ENCODE measurements at regions of chr20 and their contacts with region 1.

Region 1: DNA sequence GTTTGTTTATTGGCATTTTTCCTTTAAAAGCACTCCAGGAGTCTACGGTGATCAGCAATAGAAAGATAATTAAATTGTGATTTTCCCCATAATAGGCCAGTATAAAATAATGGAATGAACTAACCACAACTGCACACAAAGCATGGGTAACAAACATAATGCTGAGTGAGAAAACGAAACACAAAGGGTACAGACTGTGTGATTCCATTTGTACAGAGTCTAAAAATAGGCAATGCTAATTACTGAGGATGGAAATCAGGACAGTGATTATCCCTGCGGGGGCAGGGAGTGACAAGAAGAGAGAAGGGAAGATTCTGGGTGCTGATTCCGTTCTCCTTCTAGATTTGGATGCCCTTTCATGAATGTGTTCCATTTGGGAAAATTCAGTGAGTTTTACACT is 478.1 kb downstream of the PREX1 start:
- DNase-seq: no peak
- ATAC-seq: no peak
- H3K4me3 ChIP-seq: no peak overlapping the region
- H3K27ac ChIP-seq: no peak overlapping the region
- H3K4me1 ChIP-seq: no peaks in the 10 kb centered on the region
- H3K27me3 ChIP-seq: peaks cover 13% of the 10 kb centered on the region
- CTCF ChIP-seq: no peak

Region 2: DNA sequence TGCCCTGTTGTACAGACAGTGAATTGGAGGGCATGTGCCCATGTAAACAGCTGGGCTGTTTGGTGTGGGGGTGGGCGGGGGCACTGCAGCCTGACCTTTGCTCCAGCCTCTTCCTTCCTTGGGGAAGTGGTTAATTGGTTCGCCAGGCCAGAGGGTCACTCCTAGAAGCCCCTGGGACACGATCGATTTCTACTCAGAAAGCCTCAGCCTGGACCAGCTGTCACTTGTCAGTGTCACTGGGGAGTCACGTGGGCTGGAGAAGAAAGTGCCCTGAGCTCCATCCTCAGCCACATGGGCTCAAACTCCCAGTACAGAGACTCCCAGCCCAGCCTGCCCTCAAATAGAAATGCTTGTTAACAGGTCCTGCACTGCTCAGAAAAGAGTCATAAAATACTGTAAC is 140.6 kb before region 1 on chr20:
- intact Hi-C with region 1: loop called (anchors 5 kb)
- DNase-seq: no peak
- ATAC-seq: no peak
- H3K4me3 ChIP-seq: no peak overlapping the region
- H3K27ac ChIP-seq: no peak overlapping the region
- H3K4me1 ChIP-seq: no peaks in the 10 kb centered on the region
- H3K27me3 ChIP-seq: no peaks in the 10 kb centered on the region
- CTCF ChIP-seq: no peak

Region 3: DNA sequence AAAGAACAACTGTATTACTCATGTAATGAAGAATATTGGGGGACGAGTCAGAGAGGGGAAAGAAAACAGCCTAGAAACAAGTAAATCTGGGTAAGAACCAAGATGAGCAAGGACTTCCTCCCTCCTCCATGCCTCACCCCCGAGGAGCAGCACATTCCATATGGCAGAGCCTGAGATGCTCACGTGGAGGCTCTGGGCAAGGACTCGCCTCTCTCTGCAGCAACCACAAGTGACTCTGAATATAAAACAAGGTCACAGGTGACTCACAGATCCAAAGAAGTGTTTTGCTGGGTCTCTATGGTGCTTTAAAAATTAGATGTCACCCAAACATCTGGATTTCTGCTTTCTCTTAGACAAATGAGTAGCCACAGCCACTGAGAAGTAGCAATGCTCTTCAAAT is 111.3 kb before region 1 on chr20:
- intact Hi-C with region 1: no loop called
- DNase-seq: no peak
- ATAC-seq: no peak
- H3K4me3 ChIP-seq: no peak overlapping the region
- H3K27ac ChIP-seq: no peak overlapping the region
- H3K4me1 ChIP-seq: no peaks in the 10 kb centered on the region
- H3K27me3 ChIP-seq: peaks cover 5% of the 10 kb centered on the region
- CTCF ChIP-seq: no peak

Region 4: DNA sequence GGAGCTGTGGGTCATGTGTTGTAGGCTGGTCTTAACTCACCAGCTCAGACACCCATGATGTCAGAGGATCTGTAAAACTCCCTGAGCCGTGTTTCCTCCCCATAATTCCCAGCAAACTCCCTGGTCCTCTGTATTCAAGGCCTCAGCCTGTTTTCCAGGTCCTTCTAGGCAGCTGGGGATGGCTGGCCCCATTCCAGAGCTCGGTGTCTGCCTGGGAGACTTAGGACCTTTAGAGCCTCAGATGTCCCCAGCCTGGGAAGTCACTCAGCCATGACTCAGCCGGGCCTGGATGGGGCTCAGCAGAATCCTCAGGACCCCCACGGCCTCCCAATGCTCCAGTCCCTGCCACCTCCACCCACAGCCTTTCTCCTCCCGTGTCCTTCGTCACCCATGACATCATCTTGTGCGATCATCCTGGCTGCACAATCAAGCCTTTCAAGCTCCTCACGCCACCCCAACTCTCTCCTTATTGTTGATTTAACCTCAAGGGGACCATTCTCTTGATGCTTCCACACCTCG is 89.3 kb before region 1 on chr20:
- intact Hi-C with region 1: no loop called
- DNase-seq: no peak
- ATAC-seq: no peak
- H3K4me3 ChIP-seq: no peak overlapping the region
- H3K27ac ChIP-seq: no peak overlapping the region
- H3K4me1 ChIP-seq: no peaks in the 10 kb centered on the region
- H3K27me3 ChIP-seq: no peaks in the 10 kb centered on the region
- CTCF ChIP-seq: no peak

Region 5: GRCh38 chr20:48308882-48309281 is 40.8 kb before region 1 on chr20:
- intact Hi-C with region 1: no loop called
- DNase-seq: no peak
- ATAC-seq: no peak
- H3K4me3 ChIP-seq: no peak overlapping the region
- H3K27ac ChIP-seq: no peak overlapping the region
- H3K4me1 ChIP-seq: no peaks in the 10 kb centered on the region
- H3K27me3 ChIP-seq: no peaks in the 10 kb centered on the region
- CTCF ChIP-seq: no peak

Region 6: GRCh38 chr20:48490961-48491831 is 141.5 kb after region 1 on chr20:
- intact Hi-C with region 1: no loop called
- DNase-seq: no peak
- ATAC-seq: no peak
- H3K4me3 ChIP-seq: no peak overlapping the region
- H3K27ac ChIP-seq: no peak overlapping the region
- H3K4me1 ChIP-seq: no peaks in the 10 kb centered on the region
- H3K27me3 ChIP-seq: peaks cover 15% of the 10 kb centered on the region
- CTCF ChIP-seq: no peak